PC-3 (cell line): ENCODE measurements at regions of chr1 and their contacts with region 1.

Region 1: DNA sequence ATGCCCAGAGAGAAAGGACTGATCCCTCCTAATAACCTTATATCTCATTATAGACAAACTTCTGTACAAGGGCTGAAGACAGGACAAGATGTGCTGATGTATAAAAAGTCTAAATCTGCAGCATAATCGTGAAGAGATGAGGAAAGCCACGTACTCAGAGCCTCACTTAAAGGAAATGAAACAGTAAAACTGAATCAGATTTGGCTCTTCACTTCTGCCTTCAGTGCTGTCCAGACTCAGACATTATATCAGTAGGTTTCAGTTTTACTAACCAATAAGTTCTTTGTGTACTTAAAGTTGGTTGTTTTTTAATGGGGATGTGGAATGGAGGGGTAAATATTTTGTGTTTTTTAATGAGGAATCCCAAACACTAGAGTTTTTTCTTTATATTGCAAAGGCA is 45.3 kb upstream of the RGS1 start:
- DNase-seq: peak; percentile 8
- ATAC-seq: peak; percentile 20; the same call in 1 of the 2 replicates
- H3K4me3 ChIP-seq: no peak overlapping the region
- H3K27ac ChIP-seq: peak overlapping the region; percentile 77
- H3K4me1 ChIP-seq: peaks cover 26% of the 10 kb centered on the region
- H3K27me3 ChIP-seq: no peaks in the 10 kb centered on the region
- CTCF ChIP-seq: no peak

Region 2: GRCh38 chr1:192489748-192490147 is 40.5 kb before region 1 on chr1:
- CTCF ChIA-PET with region 1: no interaction called
- POLR2A ChIA-PET with region 1: no interaction called
- intact Hi-C with region 1: loop called (anchors 5 kb)
- DNase-seq: peak; percentile 74
- ATAC-seq: peak; percentile 79
- H3K4me3 ChIP-seq: no peak overlapping the region
- H3K27ac ChIP-seq: peak overlapping the region; percentile 61
- H3K4me1 ChIP-seq: peaks cover 35% of the 10 kb centered on the region
- H3K27me3 ChIP-seq: no peaks in the 10 kb centered on the region
- CTCF ChIP-seq: no peak

Region 3: GRCh38 chr1:192516776-192517297 is 13.4 kb before region 1 on chr1:
- CTCF ChIA-PET with region 1: no interaction called
- POLR2A ChIA-PET with region 1: no interaction called
- intact Hi-C with region 1: loop called (anchors 1 kb)
- DNase-seq: peak; percentile 66
- ATAC-seq: peak; percentile 91
- H3K4me3 ChIP-seq: no peak overlapping the region; the same call in 1 of the 2 replicates
- H3K27ac ChIP-seq: peak overlapping the region; percentile 72
- H3K4me1 ChIP-seq: peaks cover 13% of the 10 kb centered on the region
- H3K27me3 ChIP-seq: no peaks in the 10 kb centered on the region
- CTCF ChIP-seq: no peak

Region 4: GRCh38 chr1:192566657-192567056 is 36.4 kb after region 1 on chr1:
- CTCF ChIA-PET with region 1: no interaction called
- POLR2A ChIA-PET with region 1: no interaction called
- intact Hi-C with region 1: no loop called
- DNase-seq: no peak
- ATAC-seq: no peak
- H3K4me3 ChIP-seq: no peak overlapping the region
- H3K27ac ChIP-seq: no peak overlapping the region
- H3K4me1 ChIP-seq: no peaks in the 10 kb centered on the region
- H3K27me3 ChIP-seq: no peaks in the 10 kb centered on the region
- CTCF ChIP-seq: no peak